Colonic mucosa (tissue), 4 donors: ENCODE measurements at regions of chr6 and their contacts with region 1.

Region 1: DNA sequence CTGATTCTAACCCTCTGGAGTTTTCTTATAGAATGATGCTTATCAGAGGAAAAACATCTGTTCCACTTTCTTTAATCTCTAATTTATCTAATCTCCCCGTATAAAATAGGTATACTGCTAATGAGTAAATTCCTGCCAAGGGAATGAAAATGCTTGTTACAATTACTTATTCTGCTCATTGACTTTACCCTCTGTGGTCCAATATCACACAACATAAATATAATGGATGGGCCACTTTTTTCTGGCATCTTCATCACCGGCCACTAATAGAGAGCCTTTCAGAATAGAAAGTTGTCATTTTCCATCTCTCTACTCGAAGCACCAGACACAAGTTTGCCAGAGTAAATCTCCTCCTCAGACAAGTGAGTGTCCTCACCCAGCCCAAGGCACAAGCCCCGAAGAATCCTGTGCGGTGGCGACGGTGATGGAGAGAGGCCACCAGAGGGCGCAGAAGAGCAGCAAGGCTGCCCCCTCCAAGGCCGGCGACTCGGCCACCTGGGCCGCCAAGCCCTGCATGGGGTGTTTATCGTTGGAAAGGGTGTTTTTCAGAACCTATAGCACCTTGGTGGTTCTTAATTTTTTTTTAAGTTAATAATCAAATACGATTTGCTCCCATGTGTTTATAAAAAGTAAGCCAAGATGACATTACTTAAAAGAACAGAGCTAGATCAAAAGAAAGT is 212.9 kb upstream of the ARID1B start:
- DNase-seq: peak; percentile 79
- H3K4me3 ChIP-seq: no peak overlapping the region
- H3K27ac ChIP-seq: no peak overlapping the region
- H3K4me1 ChIP-seq: no peaks in the 10 kb centered on the region
- H3K27me3 ChIP-seq: no peaks in the 10 kb centered on the region
- CTCF ChIP-seq: peak; percentile 93

Region 2: DNA sequence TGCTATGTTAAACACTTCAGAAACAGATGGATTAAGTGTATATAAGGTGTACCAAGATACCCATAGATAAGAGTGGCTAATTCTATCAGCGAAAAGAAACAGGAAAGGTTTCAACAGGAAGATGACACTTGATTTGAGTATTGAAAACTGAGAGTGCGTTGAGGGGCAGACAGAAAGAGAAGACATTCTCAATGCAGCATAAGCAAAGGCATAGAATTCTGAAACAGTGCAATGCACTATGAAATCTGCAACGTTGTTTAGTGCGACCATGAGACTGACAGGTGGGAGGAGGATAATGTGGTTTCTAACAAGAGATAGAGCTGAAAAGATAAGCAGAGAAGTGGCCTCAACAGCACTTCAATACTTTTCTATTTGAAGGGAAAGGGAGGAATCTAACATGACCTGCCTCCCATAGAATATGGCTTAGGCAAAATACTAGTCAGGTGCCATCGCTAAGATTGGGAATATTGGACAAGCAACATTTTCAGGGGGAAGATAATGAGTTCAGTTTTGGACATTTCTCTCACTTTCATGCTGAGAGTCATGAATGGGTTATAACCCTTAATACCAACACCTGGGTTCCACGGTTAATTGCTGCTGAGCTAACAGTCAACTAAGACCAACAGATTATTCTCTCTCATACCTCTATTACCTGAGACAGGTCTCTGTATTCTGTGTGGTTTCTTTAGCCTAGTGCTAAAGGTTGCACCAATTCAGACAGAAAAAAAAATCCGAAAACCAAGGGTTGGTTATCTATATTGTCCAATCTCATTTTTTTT is 100.0 kb before region 1 on chr6:
- intact Hi-C with region 1: no loop called
- DNase-seq: no peak
- H3K4me3 ChIP-seq: no peak overlapping the region
- H3K27ac ChIP-seq: no peak overlapping the region
- H3K4me1 ChIP-seq: no peaks in the 10 kb centered on the region
- H3K27me3 ChIP-seq: no peaks in the 10 kb centered on the region
- CTCF ChIP-seq: no peak

Region 3: DNA sequence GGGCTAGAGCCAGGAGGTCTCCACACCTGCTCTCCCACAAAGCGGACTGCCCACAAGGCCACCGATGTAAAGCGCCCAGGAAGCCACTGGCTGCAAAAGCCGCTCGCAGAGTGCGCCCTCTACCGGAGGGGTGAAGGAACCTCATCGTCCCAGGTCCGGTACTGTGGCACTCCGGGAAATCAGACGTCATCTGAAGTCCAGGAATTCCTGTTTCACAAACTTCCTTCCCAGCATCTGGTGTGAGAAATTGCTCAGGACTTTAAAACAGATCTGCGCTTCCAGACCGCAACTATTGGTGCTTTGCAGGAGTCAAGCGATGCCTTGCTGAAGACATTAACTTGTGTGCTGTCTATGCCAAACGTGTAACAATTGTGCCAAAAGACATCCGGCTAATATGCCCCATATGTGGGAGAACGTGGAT is 97.8 kb after region 1 on chr6:
- intact Hi-C with region 1: loop called (anchors 5 kb)
- DNase-seq: peak; percentile 41
- H3K4me3 ChIP-seq: no peak overlapping the region
- H3K27ac ChIP-seq: no peak overlapping the region
- H3K4me1 ChIP-seq: no peaks in the 10 kb centered on the region
- H3K27me3 ChIP-seq: no peaks in the 10 kb centered on the region
- CTCF ChIP-seq: peak; percentile 33

Region 4: DNA sequence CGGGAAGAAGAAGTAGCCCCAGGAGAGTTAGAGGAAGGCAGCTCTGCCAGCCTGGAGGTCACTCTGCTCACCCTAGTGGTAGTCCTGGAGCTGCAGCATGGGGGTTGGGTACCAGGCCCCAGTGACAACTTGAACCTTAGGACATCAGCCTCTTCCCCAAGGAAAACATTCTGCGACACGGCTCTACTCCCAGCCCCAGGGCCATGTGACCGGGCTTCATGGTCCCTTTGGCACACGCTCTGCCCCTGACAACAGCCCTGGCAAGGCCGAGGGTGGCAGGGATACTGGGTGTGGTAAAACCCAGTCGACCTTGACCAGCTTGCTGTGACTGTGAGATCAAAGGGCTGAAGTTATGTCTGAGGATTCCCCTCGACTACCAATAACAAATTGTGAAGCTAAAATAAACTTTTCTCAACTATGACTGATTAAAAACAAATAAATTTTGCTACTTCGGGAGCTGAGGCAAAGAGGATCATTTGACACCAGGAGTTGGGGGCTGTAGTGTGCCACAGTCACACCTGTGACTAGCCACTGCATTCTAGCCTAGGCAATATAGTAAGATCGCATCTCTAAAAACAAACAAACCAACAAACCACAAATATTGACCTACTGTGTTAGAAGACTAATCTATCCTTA is 188.5 kb after region 1 on chr6:
- intact Hi-C with region 1: loop called (anchors 5 kb)
- DNase-seq: peak; percentile 43
- H3K4me3 ChIP-seq: no peak overlapping the region
- H3K27ac ChIP-seq: no peak overlapping the region
- H3K4me1 ChIP-seq: no peaks in the 10 kb centered on the region
- H3K27me3 ChIP-seq: no peaks in the 10 kb centered on the region
- CTCF ChIP-seq: peak; percentile 31

Region 5: DNA sequence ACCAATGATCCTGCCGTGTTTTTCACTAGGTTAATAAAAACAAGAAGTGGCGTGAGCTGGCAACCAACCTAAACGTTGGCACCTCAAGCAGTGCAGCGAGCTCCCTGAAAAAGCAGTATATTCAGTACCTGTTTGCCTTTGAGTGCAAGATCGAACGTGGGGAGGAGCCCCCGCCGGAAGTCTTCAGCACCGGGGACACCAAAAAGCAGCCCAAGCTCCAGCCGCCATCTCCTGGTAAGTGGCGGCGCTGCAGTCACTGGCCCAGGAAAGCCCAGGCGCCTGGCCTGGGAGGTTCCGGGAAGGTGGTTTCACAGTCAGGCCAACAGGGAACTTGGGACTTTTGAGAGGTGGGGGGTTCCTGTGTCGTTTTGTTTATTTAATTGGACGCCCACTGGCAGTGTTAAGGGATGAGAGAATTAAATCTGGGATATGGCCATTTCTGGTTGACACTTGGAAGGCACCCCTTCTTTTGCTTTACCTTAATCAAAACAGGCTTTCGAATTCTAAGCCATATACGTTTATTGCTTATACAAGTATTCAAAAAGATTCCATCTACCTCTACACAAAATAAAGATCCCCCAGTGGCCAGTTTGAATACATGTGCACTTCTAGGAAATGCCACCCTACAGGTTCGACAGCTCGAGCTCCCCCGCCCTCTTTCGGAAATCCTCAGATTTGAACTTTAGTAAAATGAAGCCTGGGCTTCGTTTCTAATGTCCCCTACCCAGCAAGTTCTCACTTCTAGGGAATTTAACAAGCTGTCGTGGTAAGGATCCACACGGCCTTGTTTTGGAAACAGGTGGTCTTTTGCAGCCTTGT is 620.1 kb after region 1 on chr6:
- intact Hi-C with region 1: loop called (anchors 10 kb)
- DNase-seq: peak; percentile 85
- H3K4me3 ChIP-seq: no peak overlapping the region
- H3K27ac ChIP-seq: no peak overlapping the region
- H3K4me1 ChIP-seq: no peaks in the 10 kb centered on the region
- H3K27me3 ChIP-seq: no peaks in the 10 kb centered on the region
- CTCF ChIP-seq: peak; percentile 96